ENCODE measurements at regions of chr5 and their contacts with region 1.

Region 1: DNA sequence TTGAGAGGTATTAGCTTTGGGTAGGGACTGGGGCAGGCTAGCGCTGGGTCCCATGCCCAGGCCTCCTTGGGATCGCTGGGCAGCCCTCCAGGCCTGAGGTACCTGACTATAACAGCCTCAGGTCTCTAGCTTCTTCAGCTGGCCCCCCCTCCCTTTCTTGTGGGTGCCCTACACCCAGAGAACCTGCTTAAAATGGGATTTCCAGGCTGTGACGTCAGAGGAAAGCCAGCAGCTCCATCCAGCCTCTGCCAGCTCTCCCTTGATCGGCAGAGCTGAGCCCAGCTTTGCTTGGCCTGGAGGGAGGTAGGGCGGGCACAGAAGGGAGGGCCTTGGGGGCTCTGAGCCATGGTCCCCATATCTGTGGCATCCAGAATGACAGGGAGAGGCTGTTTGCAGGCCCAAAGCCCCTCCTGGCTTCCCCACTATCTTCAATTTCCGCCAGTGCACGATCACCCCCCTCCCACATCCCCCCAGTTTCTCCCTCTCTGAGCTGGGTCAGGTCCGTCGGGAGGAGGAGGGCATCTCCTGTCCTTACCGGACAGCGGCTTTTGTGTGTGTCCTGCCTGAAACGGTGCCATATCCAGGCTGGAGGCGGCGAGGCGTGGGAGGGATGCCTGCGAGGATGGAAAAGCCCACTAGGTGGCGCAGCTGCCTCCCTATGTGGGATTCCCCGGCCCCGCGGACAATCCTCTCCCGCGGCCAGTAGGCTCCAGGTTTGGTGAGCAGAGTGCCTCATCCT is 10.8 kb downstream of the REEP2 start:
- DNase-seq: peak; percentile 63 to 81 (median 70)
- H3K4me3 ChIP-seq: no peak overlapping the region
- H3K4me3 Mint-ChIP-seq: peak overlapping the region in 3 of 7 donors; percentile 15 to 51 (median 39)
- H3K27ac ChIP-seq: no peak overlapping the region
- H3K27ac Mint-ChIP-seq: peak overlapping the region in 5 of 8 donors; percentile 45 to 89 (median 74)
- H3K4me1 ChIP-seq: peaks cover 8% of the 10 kb centered on the region
- H3K4me1 Mint-ChIP-seq: peaks cover 5% of the 10 kb centered on the region in 3 donors
- H3K27me3 ChIP-seq: no peaks in the 10 kb centered on the region
- H3K27me3 Mint-ChIP-seq: no peaks in the 10 kb centered on the region

Region 2: DNA sequence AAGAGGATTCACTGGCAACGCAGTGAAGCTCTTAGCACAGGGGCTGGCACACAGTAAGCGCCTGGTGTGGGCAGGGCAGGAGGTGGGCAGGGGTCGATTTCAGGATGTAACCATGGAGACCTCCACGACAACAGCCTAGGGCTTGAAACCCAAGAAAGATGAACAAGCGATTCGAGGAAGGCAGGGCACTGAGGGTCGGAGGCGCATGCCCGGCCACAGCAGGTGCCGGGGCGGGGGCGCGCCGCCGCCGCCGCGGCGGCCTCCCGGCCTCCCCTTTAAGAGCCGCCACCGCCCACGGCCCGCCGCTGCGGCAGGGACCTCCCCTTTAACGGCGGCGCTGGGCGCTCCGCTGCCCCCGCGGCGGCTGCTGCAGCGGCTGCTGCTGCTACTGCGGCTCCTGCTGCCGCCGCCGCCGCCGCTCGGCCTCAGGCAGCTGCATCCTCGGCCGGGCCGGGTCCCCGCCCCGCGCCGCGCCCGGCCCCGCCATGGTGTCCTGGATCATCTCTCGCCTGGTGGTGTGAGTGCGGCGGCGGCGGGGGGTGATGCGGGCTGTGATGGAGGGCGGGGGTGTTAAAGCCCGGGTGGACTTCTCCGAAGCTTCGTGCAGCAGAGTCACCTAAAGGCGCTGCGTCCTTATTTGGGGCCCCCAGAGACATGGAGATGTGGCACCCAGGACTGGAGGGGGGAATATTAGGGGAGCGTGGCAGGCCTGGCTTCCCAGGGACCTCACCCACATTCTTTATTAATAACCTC is 10.8 kb before region 1 on chr5 and contains the start of gene REEP2:
- CTCF ChIA-PET with region 1: interaction called, 25 read pairs
- POLR2A ChIA-PET with region 1: no interaction called
- DNase-seq: peak; percentile 50 to 74 (median 56)
- H3K4me3 ChIP-seq: peak within 1 kb of the TSS; percentile 61
- H3K4me3 Mint-ChIP-seq: peak within 1 kb of the TSS; percentile 80 to 95 (median 83)
- H3K27ac ChIP-seq: no peak within 1 kb of the TSS
- H3K27ac Mint-ChIP-seq: peak within 1 kb of the TSS in 6 of 8 donors; percentile 50 to 90 (median 64)
- H3K4me1 ChIP-seq: peaks cover 10% of the 10 kb centered on the region
- H3K4me1 Mint-ChIP-seq: peaks cover 17 to 26% (median 17%) of the 10 kb centered on the region in 3 donors
- H3K27me3 ChIP-seq: no peaks in the 10 kb centered on the region
- H3K27me3 Mint-ChIP-seq: peaks cover 0 to 2% of the 10 kb centered on the region in 2 donors
- total RNA-seq, gene REEP2: 5.0 to 6.6 TPM

Region 3: DNA sequence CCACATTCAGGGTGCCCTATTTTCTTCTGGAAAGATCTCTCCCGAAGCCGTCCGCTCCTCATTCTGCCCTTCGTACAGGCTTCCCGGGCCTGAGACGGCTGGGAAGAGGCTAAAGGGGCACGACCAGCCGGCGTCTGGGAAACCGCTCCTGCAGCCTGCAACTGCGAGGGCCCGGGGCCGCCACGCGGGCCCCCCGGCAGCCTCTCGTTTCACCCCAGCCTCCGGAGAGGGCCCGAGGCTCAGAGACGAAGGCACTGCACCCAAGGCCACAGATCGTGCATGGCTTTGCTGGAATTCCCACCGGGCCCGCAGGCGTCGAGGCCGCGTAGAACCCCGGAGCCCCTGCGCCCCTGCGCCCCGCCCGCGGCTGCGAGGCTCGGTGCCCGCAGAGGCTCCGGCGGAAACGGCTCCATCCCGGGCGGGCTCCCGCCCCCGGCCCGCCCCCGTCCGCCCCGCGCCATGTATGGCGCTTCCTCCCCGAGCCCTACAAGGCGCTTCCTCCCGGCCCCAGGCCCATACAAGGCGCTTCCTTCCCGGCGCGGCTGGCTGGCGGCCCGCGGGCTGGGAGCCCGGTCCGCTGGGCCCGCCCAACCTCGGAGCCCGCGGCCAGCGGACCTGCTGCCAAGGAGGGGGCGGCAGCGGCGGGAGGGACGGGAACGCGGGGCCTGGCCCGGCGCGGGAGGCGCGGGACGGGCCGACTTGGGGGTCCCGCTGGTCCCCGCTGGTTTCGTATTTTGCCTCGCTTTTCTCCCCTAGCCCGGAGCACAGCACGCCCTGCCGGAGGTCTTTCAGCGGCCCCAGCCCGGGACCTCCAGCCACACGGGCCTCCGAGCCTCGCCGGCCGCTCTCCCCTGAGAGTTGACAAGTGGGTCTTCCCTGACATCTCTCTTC is 42.2 kb after region 1 on chr5:
- CTCF ChIA-PET with region 1: interaction called, 155 read pairs
- POLR2A ChIA-PET with region 1: no interaction called
- DNase-seq: peak; percentile 80 to 90 (median 84)
- H3K4me3 ChIP-seq: peak overlapping the region; percentile 62
- H3K4me3 Mint-ChIP-seq: peak overlapping the region; percentile 84 to 91 (median 87)
- H3K27ac ChIP-seq: peak overlapping the region; percentile 47
- H3K27ac Mint-ChIP-seq: peak overlapping the region in 5 of 8 donors; percentile 39 to 91 (median 72)
- H3K4me1 ChIP-seq: peaks cover 18% of the 10 kb centered on the region
- H3K4me1 Mint-ChIP-seq: peaks cover 8 to 20% (median 13%) of the 10 kb centered on the region in 3 donors
- H3K27me3 ChIP-seq: peaks cover 5% of the 10 kb centered on the region
- H3K27me3 Mint-ChIP-seq: peaks cover 9 to 31% of the 10 kb centered on the region in 2 donors

Region 4: GRCh38 chr5:138503487-138504270 is 54.0 kb after region 1 on chr5:
- CTCF ChIA-PET with region 1: interaction called, 155 read pairs
- POLR2A ChIA-PET with region 1: interaction called, 4 read pairs
- DNase-seq: peak in 2 of 5 donors; percentile 50 to 52
- H3K4me3 ChIP-seq: no peak overlapping the region
- H3K4me3 Mint-ChIP-seq: no peak overlapping the region
- H3K27ac ChIP-seq: no peak overlapping the region
- H3K27ac Mint-ChIP-seq: peak overlapping the region in 5 of 8 donors; percentile 7 to 77 (median 27)
- H3K4me1 ChIP-seq: no peaks in the 10 kb centered on the region
- H3K4me1 Mint-ChIP-seq: peaks cover 3 to 5% (median 4%) of the 10 kb centered on the region in 3 donors
- H3K27me3 ChIP-seq: no peaks in the 10 kb centered on the region
- H3K27me3 Mint-ChIP-seq: no peaks in the 10 kb centered on the region

Region 5: DNA sequence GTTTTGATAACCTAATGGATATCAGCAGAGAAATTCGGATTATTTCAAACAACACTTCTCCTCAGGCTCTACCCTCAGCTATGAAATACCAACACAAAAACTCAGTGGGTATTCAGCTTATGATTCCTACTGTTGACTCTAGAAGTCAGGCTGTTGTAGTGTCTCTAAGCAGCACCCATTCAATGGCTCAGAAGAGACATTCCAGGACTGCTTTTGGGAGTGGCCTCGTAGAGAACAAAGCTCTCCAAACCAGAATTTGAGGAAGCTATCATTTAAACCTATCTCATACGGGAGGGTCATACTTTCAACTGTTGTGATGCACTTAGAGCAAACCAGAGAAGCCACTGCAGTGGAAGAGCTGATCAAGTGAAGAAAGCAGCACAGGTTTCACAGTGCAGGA is 59.3 kb after region 1 on chr5:
- CTCF ChIA-PET with region 1: interaction called, 155 read pairs
- POLR2A ChIA-PET with region 1: interaction called, 3 read pairs
- DNase-seq: no peak
- H3K4me3 ChIP-seq: no peak overlapping the region
- H3K4me3 Mint-ChIP-seq: no peak overlapping the region
- H3K27ac ChIP-seq: no peak overlapping the region
- H3K27ac Mint-ChIP-seq: peak overlapping the region in 4 of 8 donors; percentile 21 to 76 (median 37)
- H3K4me1 ChIP-seq: no peaks in the 10 kb centered on the region
- H3K4me1 Mint-ChIP-seq: peaks cover 0 to 4% (median 0%) of the 10 kb centered on the region in 3 donors
- H3K27me3 ChIP-seq: no peaks in the 10 kb centered on the region
- H3K27me3 Mint-ChIP-seq: no peaks in the 10 kb centered on the region

Measured in CD8-positive, alpha-beta memory T cell (primary cell).